ENCODE measurements at regions of chr16 and their contacts with region 1.

Region 1: DNA sequence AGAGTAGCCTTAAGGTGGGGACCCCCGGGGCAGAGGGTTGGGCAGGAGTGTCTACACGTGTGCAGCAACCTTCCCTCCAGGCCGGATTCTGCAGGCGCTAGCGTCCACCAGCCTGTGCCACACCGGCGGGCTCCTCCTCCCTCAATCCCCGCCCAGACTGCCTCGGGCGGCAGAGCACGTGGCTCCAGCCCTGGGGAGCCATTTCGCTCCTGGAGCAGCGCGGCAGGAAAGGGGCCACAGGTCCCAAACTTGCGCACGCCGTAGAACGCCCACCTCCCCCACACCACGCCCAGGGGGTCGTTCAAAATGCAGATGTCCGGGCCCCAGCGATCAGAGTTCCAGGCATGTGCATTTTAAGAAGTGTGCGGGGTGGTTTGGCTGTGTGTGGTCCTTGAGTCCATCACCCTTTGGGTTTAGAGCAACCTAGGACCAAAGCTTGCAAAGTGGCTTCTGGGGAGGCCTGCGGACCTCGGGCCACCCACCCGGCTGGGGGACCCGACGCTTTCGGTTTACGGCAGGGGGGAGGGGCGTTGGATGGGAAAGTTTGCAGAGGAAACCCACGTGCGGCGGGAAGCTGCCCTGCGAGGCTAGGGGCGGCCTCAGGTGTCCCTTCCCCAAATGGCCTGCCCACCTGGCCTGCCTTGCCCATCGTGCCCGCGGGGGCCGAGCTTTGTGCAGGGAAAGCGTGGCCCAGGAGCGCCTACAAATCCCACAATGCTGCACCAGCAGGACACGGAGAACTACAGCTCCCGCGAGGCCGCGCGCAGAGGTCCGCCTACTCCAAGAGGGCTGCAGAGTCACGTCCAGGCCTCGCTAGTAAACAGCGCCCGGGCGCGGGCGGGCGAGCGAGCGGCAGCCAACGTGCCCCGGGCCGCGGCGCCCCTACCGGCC is 1.4 kb downstream of the TFAP4 start:
- DNase-seq: peak; percentile 91
- ATAC-seq: peak; percentile 76
- H3K4me3 ChIP-seq: peak overlapping the region; percentile 43 to 99 (median 92)
- H3K4me3 Mint-ChIP-seq: peak overlapping the region; percentile 89
- H3K27ac ChIP-seq: peak overlapping the region; percentile 38 to 42
- H3K27ac Mint-ChIP-seq: peak overlapping the region; percentile 85
- H3K4me1 ChIP-seq: peaks cover 7 to 13% of the 10 kb centered on the region in 2 donors
- H3K4me1 Mint-ChIP-seq: peaks cover 11% of the 10 kb centered on the region
- H3K27me3 ChIP-seq: no peaks in the 10 kb centered on the region
- H3K27me3 Mint-ChIP-seq: no peaks in the 10 kb centered on the region
- CTCF ChIP-seq: peak; percentile 21

Region 2: GRCh38 chr16:4116337-4117249 is 154.8 kb before region 1 on chr16 and contains the start of gene ADCY9:
- CTCF ChIA-PET with region 1: no interaction called
- POLR2A ChIA-PET with region 1: no interaction called
- intact Hi-C with region 1: loop called (anchors 5 kb)
- DNase-seq: peak; percentile 88
- ATAC-seq: peak; percentile 86
- H3K4me3 ChIP-seq: peak within 1 kb of the TSS in 4 of 5 experiments; percentile 46 to 75 (median 58)
- H3K4me3 Mint-ChIP-seq: peak within 1 kb of the TSS; percentile 91
- H3K27ac ChIP-seq: no peak within 1 kb of the TSS
- H3K27ac Mint-ChIP-seq: peak within 1 kb of the TSS; percentile 64
- H3K4me1 ChIP-seq: peaks cover 10 to 13% of the 10 kb centered on the region in 2 donors
- H3K4me1 Mint-ChIP-seq: peaks cover 18% of the 10 kb centered on the region
- H3K27me3 ChIP-seq: peaks cover 0 to 6% (median 0%) of the 10 kb centered on the region in 4 experiments
- H3K27me3 Mint-ChIP-seq: peaks cover 22% of the 10 kb centered on the region
- CTCF ChIP-seq: no peak
- total RNA-seq, gene ADCY9: 1.7 and 1.9 TPM in 2 replicates

Region 3: GRCh38 chr16:4307215-4308037 is 36.0 kb after region 1 on chr16:
- CTCF ChIA-PET with region 1: interaction called, 9 read pairs
- POLR2A ChIA-PET with region 1: interaction called, 3 read pairs
- intact Hi-C with region 1: loop called (anchors 1 kb)
- DNase-seq: peak; percentile 98
- ATAC-seq: peak; percentile 86
- H3K4me3 ChIP-seq: peak overlapping the region; percentile 58 to 95 (median 72)
- H3K4me3 Mint-ChIP-seq: peak overlapping the region; percentile 96
- H3K27ac ChIP-seq: peak overlapping the region; percentile 89 to 91
- H3K27ac Mint-ChIP-seq: peak overlapping the region; percentile 96
- H3K4me1 ChIP-seq: peaks cover 14 to 38% of the 10 kb centered on the region in 2 donors
- H3K4me1 Mint-ChIP-seq: peaks cover 35% of the 10 kb centered on the region
- H3K27me3 ChIP-seq: peaks cover 0 to 2% (median 0%) of the 10 kb centered on the region in 4 experiments
- H3K27me3 Mint-ChIP-seq: no peaks in the 10 kb centered on the region
- CTCF ChIP-seq: no peak

Region 4: GRCh38 chr16:4350787-4351659 is 79.6 kb after region 1 on chr16 and contains the start of gene PAM16:
- CTCF ChIA-PET with region 1: no interaction called
- POLR2A ChIA-PET with region 1: no interaction called
- intact Hi-C with region 1: loop called (anchors 1 kb)
- DNase-seq: peak; percentile 97
- ATAC-seq: peak; percentile 92
- H3K4me3 ChIP-seq: peak within 1 kb of the TSS; percentile 56 to 84 (median 81)
- H3K4me3 Mint-ChIP-seq: peak within 1 kb of the TSS; percentile 96
- H3K27ac ChIP-seq: peak within 1 kb of the TSS; percentile 57 to 78
- H3K27ac Mint-ChIP-seq: peak within 1 kb of the TSS; percentile 95
- H3K4me1 ChIP-seq: peaks cover 9 to 17% of the 10 kb centered on the region in 2 donors
- H3K4me1 Mint-ChIP-seq: peaks cover 22% of the 10 kb centered on the region
- H3K27me3 ChIP-seq: no peaks in the 10 kb centered on the region
- H3K27me3 Mint-ChIP-seq: no peaks in the 10 kb centered on the region
- CTCF ChIP-seq: peak; percentile 33
- total RNA-seq, gene PAM16: 56.6 and 57.3 TPM in 2 replicates

Region 5: GRCh38 chr16:4425378-4426020 is 154.1 kb after region 1 on chr16 and contains the start of gene DNAJA3:
- CTCF ChIA-PET with region 1: no interaction called
- POLR2A ChIA-PET with region 1: no interaction called
- intact Hi-C with region 1: no loop called
- DNase-seq: peak; percentile 98
- ATAC-seq: peak; percentile 92
- H3K4me3 ChIP-seq: peak within 1 kb of the TSS; percentile 80 to 99 (median 89)
- H3K4me3 Mint-ChIP-seq: peak within 1 kb of the TSS; percentile 97
- H3K27ac ChIP-seq: peak within 1 kb of the TSS; percentile 93 to 96
- H3K27ac Mint-ChIP-seq: peak within 1 kb of the TSS; percentile 100
- H3K4me1 ChIP-seq: peaks cover 14 to 20% of the 10 kb centered on the region in 2 donors
- H3K4me1 Mint-ChIP-seq: peaks cover 25% of the 10 kb centered on the region
- H3K27me3 ChIP-seq: no peaks in the 10 kb centered on the region
- H3K27me3 Mint-ChIP-seq: no peaks in the 10 kb centered on the region
- CTCF ChIP-seq: no peak
- total RNA-seq, gene DNAJA3: 59.3 and 68.1 TPM in 2 replicates

Region 6: DNA sequence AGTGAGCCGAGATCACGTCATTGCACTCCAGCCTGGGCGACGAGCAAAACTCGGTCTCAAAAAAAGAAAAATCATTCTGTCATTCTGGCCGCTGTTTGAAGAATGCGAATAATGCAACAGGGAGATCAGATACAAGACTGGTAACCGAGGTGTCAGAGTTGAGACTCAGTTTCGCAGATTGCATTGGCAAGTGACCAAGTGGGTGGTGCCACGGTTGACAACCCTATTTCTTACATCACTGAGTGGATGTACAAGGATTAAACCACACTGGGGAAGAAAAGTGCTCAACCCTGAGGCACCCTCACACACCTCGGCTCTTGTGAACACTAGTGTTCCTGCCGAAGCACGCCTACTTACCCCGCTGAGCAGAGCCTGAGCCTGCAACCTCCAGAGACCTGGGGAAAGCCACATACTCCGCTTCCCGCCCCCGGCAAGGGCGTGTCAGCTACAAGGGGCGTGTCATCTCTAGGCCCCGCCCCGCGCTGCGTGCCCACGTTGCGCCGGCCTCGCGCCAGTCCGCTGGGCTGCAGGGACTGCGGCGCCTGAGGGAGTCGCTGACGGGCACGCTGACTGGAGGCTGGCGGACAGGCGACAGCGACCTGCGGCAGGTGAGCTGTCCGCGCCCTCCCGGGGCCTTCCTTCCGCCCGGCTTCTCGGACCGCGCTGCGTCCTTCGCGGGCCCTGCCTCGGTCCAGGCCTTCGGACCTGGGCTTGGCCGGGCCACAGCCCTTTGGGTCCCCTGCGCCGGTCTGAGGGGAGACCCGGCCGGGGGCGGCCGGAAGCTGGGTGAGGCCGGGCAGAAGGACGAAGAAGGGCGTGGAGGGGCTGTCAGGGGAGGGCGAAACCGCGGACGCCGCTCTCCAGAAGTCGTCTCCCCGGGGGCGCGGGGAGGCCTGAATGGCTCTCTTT is 204.7 kb after region 1 on chr16 and contains the start of gene HMOX2:
- CTCF ChIA-PET with region 1: no interaction called
- POLR2A ChIA-PET with region 1: no interaction called
- intact Hi-C with region 1: loop called (anchors 5 kb)
- DNase-seq: peak; percentile 96
- ATAC-seq: peak; percentile 93
- H3K4me3 ChIP-seq: peak within 1 kb of the TSS; percentile 57 to 96 (median 86)
- H3K4me3 Mint-ChIP-seq: peak within 1 kb of the TSS; percentile 84
- H3K27ac ChIP-seq: peak within 1 kb of the TSS; percentile 28 to 78
- H3K27ac Mint-ChIP-seq: peak within 1 kb of the TSS; percentile 92
- H3K4me1 ChIP-seq: peaks cover 19 to 37% of the 10 kb centered on the region in 2 donors
- H3K4me1 Mint-ChIP-seq: peaks cover 34% of the 10 kb centered on the region
- H3K27me3 ChIP-seq: no peaks in the 10 kb centered on the region
- H3K27me3 Mint-ChIP-seq: no peaks in the 10 kb centered on the region
- CTCF ChIP-seq: peak; percentile 56
- total RNA-seq, gene HMOX2: 36.5 TPM in 2 replicates

Region 7: GRCh38 chr16:4693296-4693955 is 422.0 kb after region 1 on chr16 and contains the start of gene NUDT16L1:
- CTCF ChIA-PET with region 1: no interaction called
- POLR2A ChIA-PET with region 1: interaction called, 3 read pairs
- intact Hi-C with region 1: loop called (anchors 5 kb)
- DNase-seq: peak; percentile 97
- ATAC-seq: peak; percentile 95
- H3K4me3 ChIP-seq: peak within 1 kb of the TSS; percentile 50 to 85 (median 81)
- H3K4me3 Mint-ChIP-seq: peak within 1 kb of the TSS; percentile 91
- H3K27ac ChIP-seq: peak within 1 kb of the TSS; percentile 34 to 87
- H3K27ac Mint-ChIP-seq: peak within 1 kb of the TSS; percentile 90
- H3K4me1 ChIP-seq: peaks cover 15 to 19% of the 10 kb centered on the region in 2 donors
- H3K4me1 Mint-ChIP-seq: peaks cover 22% of the 10 kb centered on the region
- H3K27me3 ChIP-seq: no peaks in the 10 kb centered on the region
- H3K27me3 Mint-ChIP-seq: no peaks in the 10 kb centered on the region
- CTCF ChIP-seq: no peak
- total RNA-seq, gene NUDT16L1: 38.5 and 43.2 TPM in 2 replicates